Naive thymus-derived CD4-positive, alpha-beta T cell (primary cell): ENCODE measurements at regions of chr22 and their contacts with region 1.

Region 1: DNA sequence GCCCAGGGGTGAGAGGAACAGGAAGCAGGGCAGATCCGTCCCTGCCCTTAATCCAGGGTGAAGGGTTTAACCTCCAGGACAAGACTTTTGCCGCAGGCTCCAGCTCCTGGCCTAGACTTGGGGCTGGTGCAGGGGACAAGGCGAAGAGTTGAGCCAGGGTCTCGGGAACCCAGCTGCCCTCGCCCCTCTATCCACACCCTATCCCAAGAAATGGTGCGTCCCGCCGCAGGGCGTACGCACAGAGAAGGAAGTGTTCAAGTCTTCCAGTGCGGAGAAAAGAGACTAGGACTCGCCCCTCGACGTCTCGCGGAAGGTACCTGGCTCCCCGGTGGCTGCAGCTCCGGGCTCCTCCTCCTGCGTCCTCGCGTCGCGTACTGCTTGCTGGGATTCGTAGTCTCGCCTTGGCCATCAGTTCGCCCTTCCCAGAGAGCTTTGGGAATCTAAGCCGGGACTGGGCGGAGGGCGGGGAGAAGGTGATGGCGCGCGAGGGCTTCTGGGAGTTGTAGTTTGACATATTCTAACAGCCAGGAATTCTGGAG is at the start of gene ZMAT5:
- DNase-seq: peak; percentile 68 to 96 (median 93)
- ATAC-seq: peak; percentile 98
- H3K4me3 ChIP-seq: peak within 1 kb of the TSS; percentile 84
- H3K4me3 Mint-ChIP-seq: peak within 1 kb of the TSS; percentile 95 to 100 (median 99)
- H3K27ac ChIP-seq: peak within 1 kb of the TSS; percentile 88
- H3K27ac Mint-ChIP-seq: peak within 1 kb of the TSS; percentile 92 to 99 (median 97)
- H3K4me1 ChIP-seq: peaks cover 16 to 17% of the 10 kb centered on the region in 2 donors
- H3K4me1 Mint-ChIP-seq: peaks cover 21 to 59% (median 39%) of the 10 kb centered on the region in 7 donors
- H3K27me3 ChIP-seq: no peaks in the 10 kb centered on the region
- H3K27me3 Mint-ChIP-seq: no peaks in the 10 kb centered on the region
- total RNA-seq, gene ZMAT5: 12.9 to 26.4 (median 14.7) TPM

Region 2: DNA sequence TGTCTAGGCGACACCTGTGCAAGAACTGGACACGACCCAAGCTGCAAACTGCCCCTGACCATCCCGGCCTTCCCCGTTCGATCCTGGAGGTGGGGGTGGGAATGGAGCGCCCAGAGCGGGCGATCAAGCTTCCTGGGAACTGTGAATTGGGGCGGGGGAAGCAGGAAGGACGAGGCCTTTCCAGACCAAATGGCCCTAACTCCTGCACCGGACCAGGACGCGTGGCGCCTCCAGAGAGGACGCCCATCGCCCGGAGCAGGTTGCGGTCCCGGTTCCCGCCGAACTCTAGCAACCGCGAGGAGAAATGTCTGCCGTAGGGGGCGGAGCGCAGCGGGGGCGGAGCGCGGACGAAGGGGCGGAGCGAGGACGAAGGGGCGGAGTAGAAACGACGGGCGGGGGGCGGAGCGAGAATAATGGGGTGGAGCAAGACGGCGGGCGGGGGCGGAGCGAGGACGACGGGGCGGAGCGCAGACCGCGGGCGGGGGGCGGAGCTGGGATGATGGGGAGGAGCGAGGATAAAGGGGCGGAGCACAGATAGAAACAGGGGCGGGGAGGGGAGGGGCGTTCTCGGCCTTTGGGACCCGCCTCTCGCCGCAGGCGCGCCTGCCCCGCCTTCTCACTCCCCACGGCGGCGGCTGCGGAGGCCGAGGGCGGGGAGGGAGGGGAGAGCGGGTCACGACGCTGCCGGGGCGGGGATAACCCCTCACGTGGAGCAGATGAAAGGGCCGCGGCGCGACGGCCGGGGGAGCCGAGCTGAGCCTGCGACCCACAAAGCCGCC is 883.6 kb before region 1 on chr22 and contains the start of gene ZNRF3:
- CTCF ChIA-PET with region 1: no interaction called
- POLR2A ChIA-PET with region 1: no interaction called
- intact Hi-C with region 1: loop called in 1 of 2 experiments (anchors 5 kb)
- DNase-seq: peak; percentile 76 to 91 (median 87)
- ATAC-seq: peak; percentile 98
- H3K4me3 ChIP-seq: peak within 1 kb of the TSS; percentile 90
- H3K4me3 Mint-ChIP-seq: peak within 1 kb of the TSS; percentile 66 to 94 (median 88)
- H3K27ac ChIP-seq: peak within 1 kb of the TSS; percentile 15
- H3K27ac Mint-ChIP-seq: peak within 1 kb of the TSS; percentile 33 to 78 (median 62)
- H3K4me1 ChIP-seq: peaks cover 8 to 12% of the 10 kb centered on the region in 2 donors
- H3K4me1 Mint-ChIP-seq: peaks cover 13 to 29% (median 21%) of the 10 kb centered on the region in 7 donors
- H3K27me3 ChIP-seq: peaks cover 0 to 3% of the 10 kb centered on the region in 2 donors
- H3K27me3 Mint-ChIP-seq: peaks cover 8 to 72% (median 16%) of the 10 kb centered on the region in 5 donors
- total RNA-seq, gene ZNRF3: 0.59 to 0.98 (median 0.70) TPM

Region 3: DNA sequence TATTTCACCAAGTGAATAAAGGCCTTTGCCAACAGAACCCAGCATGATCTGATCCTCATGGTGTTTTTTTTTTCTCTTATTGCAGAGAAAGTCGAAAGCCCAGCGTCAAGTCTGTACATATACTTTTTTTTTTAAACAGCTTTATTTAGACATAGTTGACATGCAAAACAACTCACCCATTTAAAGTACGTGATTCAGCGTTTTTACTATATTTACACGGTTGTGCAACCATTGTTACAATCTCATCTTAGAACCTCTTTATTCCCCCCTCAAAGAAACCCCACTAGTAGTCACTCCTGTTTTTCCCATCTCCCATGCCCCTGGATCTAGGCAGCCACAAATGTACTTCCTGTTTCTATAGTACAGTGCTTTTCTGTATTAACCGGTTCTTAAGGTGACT is 357.8 kb before region 1 on chr22:
- CTCF ChIA-PET with region 1: no interaction called
- POLR2A ChIA-PET with region 1: no interaction called
- intact Hi-C with region 1: loop called in 1 of 2 experiments (anchors 10 kb)
- DNase-seq: no peak
- ATAC-seq: no peak
- H3K4me3 ChIP-seq: no peak overlapping the region
- H3K4me3 Mint-ChIP-seq: no peak overlapping the region
- H3K27ac ChIP-seq: no peak overlapping the region
- H3K27ac Mint-ChIP-seq: no peak overlapping the region
- H3K4me1 ChIP-seq: no peaks in the 10 kb centered on the region
- H3K4me1 Mint-ChIP-seq: peaks cover under 1 to 29% (median 6%) of the 10 kb centered on the region in 7 donors
- H3K27me3 ChIP-seq: no peaks in the 10 kb centered on the region
- H3K27me3 Mint-ChIP-seq: peaks cover 0 to 6% (median 0%) of the 10 kb centered on the region in 5 donors

Region 4: DNA sequence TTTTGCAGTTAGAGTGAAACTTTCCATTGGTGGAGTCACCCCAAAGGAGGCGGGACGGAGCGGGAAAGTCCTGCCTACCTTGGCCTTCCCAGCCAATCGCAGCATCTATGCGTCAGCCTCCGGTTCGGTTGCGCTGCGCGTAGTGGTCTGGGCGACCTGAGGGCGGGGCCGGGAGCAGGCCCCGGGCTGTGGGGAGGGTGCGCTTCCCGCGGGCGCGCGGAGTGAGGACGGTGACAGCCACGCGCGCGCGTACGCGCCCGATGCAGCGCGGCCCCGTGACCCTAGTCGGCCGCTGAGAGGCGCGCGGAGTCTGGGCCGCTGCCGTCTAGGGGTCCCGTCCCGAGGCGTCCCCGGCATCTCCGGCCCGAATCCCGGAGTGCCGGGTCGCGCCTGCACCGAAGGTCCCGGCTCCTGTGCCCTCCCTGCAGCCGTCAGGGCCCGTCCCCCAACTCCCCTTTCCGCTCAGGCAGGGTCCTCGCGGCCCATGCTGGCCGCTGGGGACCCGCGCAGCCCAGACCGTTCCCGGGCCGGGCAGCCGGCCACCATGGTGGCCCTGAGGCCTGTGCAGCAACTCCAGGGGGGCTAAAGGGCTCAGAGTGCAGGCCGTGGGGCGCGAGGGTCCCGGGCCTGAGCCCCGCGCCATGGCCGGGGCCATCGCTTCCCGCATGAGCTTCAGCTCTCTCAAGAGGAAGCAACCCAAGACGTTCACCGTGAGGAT is 163.2 kb before region 1 on chr22 and contains the start of gene NF2:
- CTCF ChIA-PET with region 1: no interaction called
- POLR2A ChIA-PET with region 1: no interaction called
- intact Hi-C with region 1: loop called (anchors 1 kb)
- DNase-seq: peak; percentile 96 to 99 (median 98)
- ATAC-seq: peak; percentile 98
- H3K4me3 ChIP-seq: peak within 1 kb of the TSS; percentile 92
- H3K4me3 Mint-ChIP-seq: peak within 1 kb of the TSS; percentile 85 to 98 (median 96)
- H3K27ac ChIP-seq: peak within 1 kb of the TSS; percentile 91
- H3K27ac Mint-ChIP-seq: peak within 1 kb of the TSS; percentile 91 to 99 (median 98)
- H3K4me1 ChIP-seq: peaks cover 11 to 16% of the 10 kb centered on the region in 2 donors
- H3K4me1 Mint-ChIP-seq: peaks cover 13 to 40% (median 28%) of the 10 kb centered on the region in 7 donors
- H3K27me3 ChIP-seq: no peaks in the 10 kb centered on the region
- H3K27me3 Mint-ChIP-seq: no peaks in the 10 kb centered on the region
- total RNA-seq, gene NF2: 27.6 to 56.3 (median 28.3) TPM

Region 5: GRCh38 chr22:29658176-29658575 is 108.5 kb before region 1 on chr22:
- CTCF ChIA-PET with region 1: no interaction called
- POLR2A ChIA-PET with region 1: no interaction called
- intact Hi-C with region 1: no loop called
- DNase-seq: no peak
- ATAC-seq: peak; percentile 72
- H3K4me3 ChIP-seq: no peak overlapping the region
- H3K4me3 Mint-ChIP-seq: no peak overlapping the region
- H3K27ac ChIP-seq: no peak overlapping the region
- H3K27ac Mint-ChIP-seq: peak overlapping the region in 1 of 9 donors; percentile 26
- H3K4me1 ChIP-seq: no peaks in the 10 kb centered on the region
- H3K4me1 Mint-ChIP-seq: peaks cover 0 to 1% (median 0%) of the 10 kb centered on the region in 7 donors
- H3K27me3 ChIP-seq: no peaks in the 10 kb centered on the region
- H3K27me3 Mint-ChIP-seq: no peaks in the 10 kb centered on the region

Region 6: DNA sequence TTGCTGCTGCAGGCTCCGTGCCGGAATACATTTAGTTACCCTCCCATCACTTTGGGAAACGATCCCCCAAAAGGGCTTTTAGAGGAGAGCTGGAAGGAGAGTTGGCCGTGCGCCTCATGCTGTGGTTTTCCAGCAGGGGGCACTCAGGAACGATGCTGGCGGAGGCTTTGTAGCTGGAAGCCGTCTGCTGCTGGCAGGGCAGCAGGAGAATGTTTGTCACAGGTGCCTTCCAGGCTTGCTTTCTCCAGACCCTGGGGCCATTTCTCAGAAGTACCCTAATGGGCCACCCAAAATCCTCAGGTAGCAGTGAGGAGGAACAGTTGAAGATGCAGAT is 76.9 kb before region 1 on chr22:
- CTCF ChIA-PET with region 1: no interaction called
- POLR2A ChIA-PET with region 1: no interaction called
- intact Hi-C with region 1: no loop called
- DNase-seq: peak in 6 of 9 donors; percentile 25 to 33 (median 28)
- ATAC-seq: peak; percentile 48
- H3K4me3 ChIP-seq: no peak overlapping the region
- H3K4me3 Mint-ChIP-seq: no peak overlapping the region
- H3K27ac ChIP-seq: no peak overlapping the region
- H3K27ac Mint-ChIP-seq: peak overlapping the region in 6 of 9 donors; percentile 1 to 54 (median 6)
- H3K4me1 ChIP-seq: peaks cover 0 to 5% of the 10 kb centered on the region in 2 donors
- H3K4me1 Mint-ChIP-seq: peaks cover 0 to 38% (median 7%) of the 10 kb centered on the region in 7 donors
- H3K27me3 ChIP-seq: no peaks in the 10 kb centered on the region
- H3K27me3 Mint-ChIP-seq: no peaks in the 10 kb centered on the region

Region 7: DNA sequence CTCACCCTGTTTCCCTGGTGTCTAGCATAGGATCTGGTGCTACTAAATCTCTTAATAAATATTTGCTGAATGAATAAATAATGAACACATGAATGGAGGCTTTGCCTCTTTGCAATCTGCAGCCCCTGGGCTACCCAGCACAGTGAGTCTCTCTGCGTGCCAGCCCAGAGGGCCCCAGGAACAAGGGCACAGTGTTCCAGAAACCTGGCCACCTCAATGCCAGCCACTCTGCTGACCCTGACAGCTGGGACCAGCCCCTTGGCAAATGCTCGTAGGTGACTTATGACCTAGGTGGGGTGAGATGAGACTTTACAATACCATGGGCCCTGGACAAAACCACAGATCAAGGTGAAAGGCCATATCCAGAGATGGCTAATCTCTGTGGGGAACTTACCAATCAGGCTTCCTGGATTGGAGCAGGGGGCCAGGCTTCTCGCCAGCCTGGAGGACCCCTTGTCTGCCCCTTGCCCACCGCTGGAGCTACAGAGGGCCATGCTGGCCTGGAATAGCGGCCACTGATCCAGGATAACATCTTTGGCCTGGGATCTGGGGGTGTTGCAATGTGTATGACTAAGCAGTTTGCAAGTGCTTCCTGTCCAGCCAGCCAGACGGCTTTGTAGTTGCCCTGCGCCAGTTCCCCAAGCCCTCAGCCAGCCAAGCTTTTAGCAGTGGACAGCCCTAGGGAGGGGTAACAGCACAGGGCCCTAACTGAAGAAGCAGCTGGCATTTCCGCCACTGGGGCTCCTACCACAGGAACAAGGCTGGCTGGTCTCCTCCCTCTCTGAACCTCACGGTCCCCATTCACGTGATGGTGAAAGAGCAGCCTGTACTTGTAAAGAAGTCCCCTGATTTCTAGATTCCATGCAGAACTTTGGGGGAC is 32.3 kb after region 1 on chr22:
- CTCF ChIA-PET with region 1: no interaction called
- POLR2A ChIA-PET with region 1: no interaction called
- intact Hi-C with region 1: no loop called
- DNase-seq: no peak
- ATAC-seq: peak; percentile 86
- H3K4me3 ChIP-seq: no peak overlapping the region
- H3K4me3 Mint-ChIP-seq: no peak overlapping the region
- H3K27ac ChIP-seq: no peak overlapping the region
- H3K27ac Mint-ChIP-seq: peak overlapping the region in 2 of 9 donors; percentile 61 to 78
- H3K4me1 ChIP-seq: no peaks in the 10 kb centered on the region
- H3K4me1 Mint-ChIP-seq: peaks cover 0 to 13% (median 0%) of the 10 kb centered on the region in 7 donors
- H3K27me3 ChIP-seq: no peaks in the 10 kb centered on the region
- H3K27me3 Mint-ChIP-seq: no peaks in the 10 kb centered on the region

Region 8: DNA sequence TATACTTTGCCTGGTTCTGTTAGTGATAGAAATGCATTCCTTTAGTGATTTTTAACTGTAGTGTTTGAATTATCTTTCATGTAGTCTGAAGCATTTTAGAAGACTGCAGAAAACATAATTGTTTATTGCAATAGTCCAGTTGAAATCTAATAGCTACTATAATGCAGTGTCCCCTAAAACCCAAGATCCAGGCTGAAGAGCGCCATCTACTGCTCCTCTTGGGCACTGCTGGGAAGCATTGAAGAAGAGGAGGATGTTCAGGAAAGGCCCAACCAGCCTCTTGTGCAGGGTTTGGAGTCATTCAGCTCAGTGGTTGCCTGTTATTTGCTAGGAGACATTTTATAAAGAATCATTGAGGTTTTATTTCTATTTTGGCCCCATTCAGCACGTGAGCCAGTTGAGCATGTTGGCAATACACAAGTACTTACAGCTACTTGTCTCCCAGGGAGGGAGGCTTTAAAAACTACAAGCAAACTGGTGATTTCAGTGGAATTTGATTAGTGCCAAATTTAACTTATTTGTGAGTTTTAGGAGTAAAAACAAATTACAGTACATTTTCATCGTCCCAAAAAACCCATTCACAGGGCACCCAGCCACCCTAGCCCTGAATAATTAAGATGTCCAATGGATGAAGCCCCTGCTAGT is 238.6 kb after region 1 on chr22:
- CTCF ChIA-PET with region 1: interaction called, 4 read pairs
- POLR2A ChIA-PET with region 1: no interaction called
- intact Hi-C with region 1: loop called in 1 of 2 experiments (anchors 1 kb)
- DNase-seq: peak; percentile 15 to 69 (median 53)
- ATAC-seq: peak; percentile 76
- H3K4me3 ChIP-seq: no peak overlapping the region
- H3K4me3 Mint-ChIP-seq: no peak overlapping the region
- H3K27ac ChIP-seq: no peak overlapping the region
- H3K27ac Mint-ChIP-seq: peak overlapping the region in 4 of 9 donors; percentile 37 to 77 (median 48)
- H3K4me1 ChIP-seq: no peaks in the 10 kb centered on the region
- H3K4me1 Mint-ChIP-seq: peaks cover 0 to 18% (median 7%) of the 10 kb centered on the region in 7 donors
- H3K27me3 ChIP-seq: no peaks in the 10 kb centered on the region
- H3K27me3 Mint-ChIP-seq: no peaks in the 10 kb centered on the region

Region 9: DNA sequence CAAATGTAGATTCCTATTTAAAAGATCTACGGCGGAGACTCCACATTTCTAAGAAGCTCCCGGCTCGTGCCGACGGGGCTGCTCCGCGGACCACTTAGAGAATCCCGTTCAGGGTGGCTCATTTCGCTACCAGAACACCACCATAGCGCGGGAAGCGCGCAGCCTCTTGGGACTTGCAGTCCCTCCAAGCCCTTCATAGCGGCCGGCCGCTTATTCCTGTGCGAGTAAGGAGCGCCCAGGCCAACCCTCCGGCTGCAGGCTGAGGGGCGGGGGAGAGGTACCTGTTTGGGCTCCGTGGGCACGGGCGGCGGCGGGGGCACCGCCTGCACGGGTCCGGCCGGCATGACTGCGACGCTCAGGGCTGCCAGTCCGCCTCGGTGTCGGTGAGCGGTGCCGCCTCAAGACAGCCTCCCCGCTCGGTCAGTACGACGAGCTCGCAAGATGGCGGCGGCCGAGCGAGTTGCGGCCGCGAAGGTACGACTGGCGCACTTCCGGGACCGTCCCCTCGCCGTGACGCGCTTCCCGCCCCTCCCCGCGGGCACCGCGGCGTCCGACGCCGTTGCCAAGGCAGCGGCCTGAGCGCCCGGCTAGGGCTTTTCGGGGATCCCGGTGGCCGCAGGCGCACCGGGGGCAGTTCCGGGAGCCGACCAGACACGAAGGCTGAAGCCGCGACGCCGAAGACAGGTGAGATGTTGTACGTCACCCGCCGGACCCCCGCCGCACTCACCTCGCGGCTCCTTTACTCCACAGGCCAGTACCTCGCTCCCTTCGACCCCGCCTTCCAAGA is 589.9 kb after region 1 on chr22 and contains the starts of genes CCDC157 and SF3A1:
- CTCF ChIA-PET with region 1: no interaction called
- POLR2A ChIA-PET with region 1: no interaction called
- intact Hi-C with region 1: loop called in 1 of 2 experiments (anchors 1 kb)
- DNase-seq: peak; percentile 78 to 90 (median 86)
- ATAC-seq: peak; percentile 94
- H3K4me3 ChIP-seq: peak within 1 kb of the TSS; percentile 94
- H3K4me3 Mint-ChIP-seq: peak within 1 kb of the TSS; percentile 92 to 99 (median 95)
- H3K27ac ChIP-seq: peak within 1 kb of the TSS; percentile 100
- H3K27ac Mint-ChIP-seq: peak within 1 kb of the TSS; percentile 86 to 99 (median 95)
- H3K4me1 ChIP-seq: peaks cover 32 to 37% of the 10 kb centered on the region in 2 donors
- H3K4me1 Mint-ChIP-seq: peaks cover 35 to 62% (median 54%) of the 10 kb centered on the region in 7 donors
- H3K27me3 ChIP-seq: no peaks in the 10 kb centered on the region
- H3K27me3 Mint-ChIP-seq: peaks cover 0 to 6% (median 0%) of the 10 kb centered on the region in 5 donors
- total RNA-seq, gene CCDC157: 1.8 to 6.9 (median 3.2) TPM
- total RNA-seq, gene SF3A1: 267 to 341 (median 284) TPM